ENCODE measurements at regions of chr10 and their contacts with region 1.

Region 1: GRCh38 chr10:32367793-32368453 is 21.0 kb upstream of the EPC1 start:
- DNase-seq: peak; percentile 77
- H3K4me3 Mint-ChIP-seq: no peak overlapping the region
- H3K27ac Mint-ChIP-seq: no peak overlapping the region
- H3K4me1 Mint-ChIP-seq: peaks cover 16% of the 10 kb centered on the region
- H3K27me3 Mint-ChIP-seq: no peaks in the 10 kb centered on the region
- CTCF ChIP-seq: peak; percentile 68

Region 2: DNA sequence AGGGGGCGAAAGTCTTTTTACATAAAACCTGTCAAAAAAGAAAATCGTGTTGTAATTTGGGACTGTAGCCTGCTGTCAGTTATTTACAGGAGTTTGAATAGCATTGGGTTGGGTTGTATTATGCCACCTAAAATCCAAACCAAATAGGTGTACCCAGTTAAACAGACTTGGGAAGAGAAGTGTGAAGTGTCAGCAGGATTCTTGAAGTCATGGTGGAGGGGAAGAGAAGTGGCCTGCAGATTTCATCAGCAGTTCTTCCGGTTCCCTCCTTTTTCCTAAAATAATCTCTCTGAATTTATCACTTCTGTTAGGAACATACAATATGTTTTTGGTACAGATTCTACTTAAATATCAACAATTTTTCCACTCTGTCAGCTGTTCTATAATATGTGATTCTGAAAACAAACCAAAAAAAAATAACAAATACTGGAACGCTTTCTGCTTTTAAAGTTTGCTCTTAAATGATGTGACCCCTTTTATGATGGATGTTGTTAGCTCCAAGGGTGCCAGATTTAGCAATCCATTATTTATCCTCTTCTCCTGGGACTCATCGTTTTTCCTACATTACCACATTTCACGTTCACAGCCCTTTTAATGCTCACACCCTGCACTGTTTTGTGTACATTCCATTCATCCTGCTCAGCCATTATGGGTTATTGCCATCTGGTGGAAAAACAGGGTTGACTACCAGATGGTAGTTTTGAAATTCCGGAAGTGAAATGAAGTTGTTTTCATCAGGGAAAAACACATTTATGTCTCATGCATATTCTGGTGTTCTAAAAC is 420.6 kb before region 1 on chr10:
- CTCF ChIA-PET with region 1: no interaction called
- POLR2A ChIA-PET with region 1: no interaction called
- intact Hi-C with region 1: no loop called
- DNase-seq: peak; percentile 91
- H3K4me3 Mint-ChIP-seq: peak overlapping the region; percentile 15
- H3K27ac Mint-ChIP-seq: peak overlapping the region; percentile 81
- H3K4me1 Mint-ChIP-seq: peaks cover 19% of the 10 kb centered on the region
- H3K27me3 Mint-ChIP-seq: no peaks in the 10 kb centered on the region
- CTCF ChIP-seq: peak; percentile 59

Region 3: DNA sequence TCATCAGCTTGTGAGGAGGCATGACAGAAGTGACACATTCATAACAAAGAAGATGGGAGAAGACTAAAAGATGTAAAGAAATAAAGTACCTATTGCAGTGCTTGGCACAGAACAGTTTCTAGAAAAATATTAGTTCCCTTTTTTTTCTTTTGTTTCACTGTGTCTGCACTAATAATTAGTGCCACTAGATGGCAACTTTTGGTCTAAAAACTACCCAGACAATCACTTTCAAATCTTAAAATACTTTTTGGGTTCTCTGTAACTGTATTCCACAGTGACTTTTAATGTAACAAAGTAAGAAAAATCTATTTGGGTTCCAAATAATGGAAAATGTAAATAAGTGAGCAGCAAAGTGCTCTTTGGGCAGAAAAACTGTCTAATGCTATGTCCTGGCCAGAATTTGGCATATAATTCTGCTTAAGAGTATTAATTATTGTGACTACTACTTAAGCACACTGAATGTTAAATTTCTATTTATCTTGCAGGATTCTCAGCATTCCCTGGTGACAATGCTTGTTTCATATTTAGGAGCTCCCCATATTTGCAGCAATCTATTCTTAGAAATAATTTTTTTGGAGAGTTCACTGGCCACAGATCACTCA is 176.9 kb before region 1 on chr10:
- CTCF ChIA-PET with region 1: interaction called, 7 read pairs
- POLR2A ChIA-PET with region 1: no interaction called
- intact Hi-C with region 1: loop called (anchors 1 kb)
- DNase-seq: peak; percentile 56
- H3K4me3 Mint-ChIP-seq: no peak overlapping the region
- H3K27ac Mint-ChIP-seq: no peak overlapping the region
- H3K4me1 Mint-ChIP-seq: peaks cover 5% of the 10 kb centered on the region
- H3K27me3 Mint-ChIP-seq: no peaks in the 10 kb centered on the region
- CTCF ChIP-seq: peak; percentile 42

Region 4: DNA sequence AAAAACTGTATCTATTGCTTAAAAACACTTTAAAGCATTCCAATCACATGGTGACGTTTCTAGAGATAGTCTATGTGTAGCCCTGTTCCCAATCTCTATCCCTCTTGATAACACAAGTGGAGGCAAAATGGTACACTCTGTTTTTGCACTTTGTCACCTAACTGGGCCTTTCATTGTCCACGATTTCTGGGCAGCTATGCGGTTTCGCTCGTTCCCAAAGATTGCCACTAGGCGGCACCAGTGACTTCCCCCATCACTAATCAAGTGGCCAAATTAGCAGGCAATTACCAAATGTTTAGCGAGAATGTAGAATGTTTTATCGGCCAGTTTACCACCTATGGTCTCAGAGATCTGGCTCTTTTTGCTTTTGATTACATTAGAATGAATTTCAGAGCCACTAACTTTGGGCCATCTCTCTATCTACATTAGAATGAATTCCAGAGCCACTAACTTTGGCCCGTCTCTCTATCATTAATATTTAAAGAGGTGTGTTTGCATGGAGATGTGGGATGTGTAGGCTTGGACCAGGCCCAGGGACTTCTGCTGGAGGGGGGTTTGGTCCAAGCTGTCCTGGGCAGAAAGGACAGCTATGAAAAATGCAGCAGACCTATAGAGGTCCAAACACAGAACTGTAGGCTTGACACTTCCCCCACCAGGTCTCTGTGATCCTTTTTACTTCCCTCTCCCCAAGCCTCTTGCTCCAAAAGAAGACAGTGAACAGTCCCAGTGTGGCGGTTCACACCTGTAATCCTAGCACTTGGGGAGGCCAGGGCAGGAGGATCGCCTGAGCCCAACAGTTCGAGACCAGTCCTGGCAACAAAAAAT is 111.1 kb before region 1 on chr10:
- CTCF ChIA-PET with region 1: interaction called, 6 read pairs
- POLR2A ChIA-PET with region 1: no interaction called
- intact Hi-C with region 1: loop called (anchors 1 kb)
- DNase-seq: peak; percentile 77
- H3K4me3 Mint-ChIP-seq: no peak overlapping the region
- H3K27ac Mint-ChIP-seq: no peak overlapping the region
- H3K4me1 Mint-ChIP-seq: peaks cover 9% of the 10 kb centered on the region
- H3K27me3 Mint-ChIP-seq: no peaks in the 10 kb centered on the region
- CTCF ChIP-seq: peak; percentile 85

Region 5: GRCh38 chr10:32357056-32357735 is 10.7 kb before region 1 on chr10:
- CTCF ChIA-PET with region 1: interaction called, 18 read pairs
- POLR2A ChIA-PET with region 1: no interaction called
- intact Hi-C with region 1: no loop called
- DNase-seq: no peak
- H3K4me3 Mint-ChIP-seq: no peak overlapping the region
- H3K27ac Mint-ChIP-seq: no peak overlapping the region
- H3K4me1 Mint-ChIP-seq: peaks cover 20% of the 10 kb centered on the region
- H3K27me3 Mint-ChIP-seq: no peaks in the 10 kb centered on the region
- CTCF ChIP-seq: no peak